Activated B cell treated with CpG ODN at 0.5 μM for 24 hours (primary cell): ENCODE measurements at regions of chr6 and their contacts with region 1.

Region 1: DNA sequence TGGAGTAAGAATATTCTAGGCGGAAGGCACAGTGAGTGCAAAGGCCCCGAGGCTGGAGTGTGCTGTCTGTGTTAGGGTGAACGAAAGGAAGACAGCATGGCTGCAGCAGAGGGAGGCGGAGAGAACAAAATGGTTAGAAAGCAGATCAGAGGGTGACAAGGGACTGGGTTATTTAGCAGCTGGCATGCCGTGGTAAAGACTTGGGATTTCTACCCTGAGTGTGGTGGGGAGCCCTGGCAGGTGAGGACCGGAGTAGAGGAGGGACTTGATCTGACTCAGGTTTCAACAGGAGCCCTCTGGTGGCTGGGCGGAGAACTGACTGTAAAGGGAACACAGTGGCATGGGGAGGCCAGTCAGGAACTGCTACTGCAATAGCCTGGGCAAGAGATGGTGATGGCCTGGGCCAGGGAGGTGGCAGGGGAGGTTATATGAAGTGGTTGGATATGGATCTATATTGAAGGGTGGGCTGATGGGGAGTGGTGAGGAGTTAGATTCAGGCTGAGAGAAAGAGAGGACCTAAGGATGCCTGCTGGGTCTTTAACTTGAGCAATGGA is 38.0 kb downstream of the PIM1 start:
- DNase-seq: peak; percentile 79
- ATAC-seq: peak; percentile 97
- H3K4me3 Mint-ChIP-seq: no peak overlapping the region
- H3K27ac Mint-ChIP-seq: peak overlapping the region; percentile 5
- H3K4me1 Mint-ChIP-seq: peaks cover 20% of the 10 kb centered on the region
- H3K27me3 Mint-ChIP-seq: no peaks in the 10 kb centered on the region
- CTCF ChIP-seq: no peak

Region 2: DNA sequence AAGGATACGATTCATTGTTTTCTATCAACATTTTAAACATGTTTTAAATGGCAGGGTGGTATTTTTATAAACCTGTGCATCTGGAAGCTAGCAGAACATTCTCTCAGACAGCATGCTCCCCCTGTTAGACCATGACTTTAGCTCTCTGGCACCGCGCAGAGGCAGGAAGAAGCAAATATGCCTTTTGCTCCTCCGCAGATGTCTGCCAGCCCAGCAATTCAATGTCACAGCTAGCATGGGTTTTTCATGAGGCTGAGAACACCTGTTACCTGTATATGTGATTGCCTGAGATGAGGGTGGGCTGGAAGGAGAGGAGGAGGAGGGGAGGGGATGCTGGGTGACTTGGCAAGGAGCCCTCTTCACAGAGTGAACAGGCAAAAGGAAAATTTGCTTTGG is 228.6 kb before region 1 on chr6:
- CTCF ChIA-PET with region 1: interaction called, 15 read pairs
- POLR2A ChIA-PET with region 1: no interaction called
- intact Hi-C with region 1: loop called (anchors 1 kb)
- DNase-seq: no peak
- ATAC-seq: peak; percentile 58
- H3K4me3 Mint-ChIP-seq: no peak overlapping the region
- H3K27ac Mint-ChIP-seq: no peak overlapping the region
- H3K4me1 Mint-ChIP-seq: peaks cover 30% of the 10 kb centered on the region
- H3K27me3 Mint-ChIP-seq: no peaks in the 10 kb centered on the region
- CTCF ChIP-seq: no peak

Region 3: DNA sequence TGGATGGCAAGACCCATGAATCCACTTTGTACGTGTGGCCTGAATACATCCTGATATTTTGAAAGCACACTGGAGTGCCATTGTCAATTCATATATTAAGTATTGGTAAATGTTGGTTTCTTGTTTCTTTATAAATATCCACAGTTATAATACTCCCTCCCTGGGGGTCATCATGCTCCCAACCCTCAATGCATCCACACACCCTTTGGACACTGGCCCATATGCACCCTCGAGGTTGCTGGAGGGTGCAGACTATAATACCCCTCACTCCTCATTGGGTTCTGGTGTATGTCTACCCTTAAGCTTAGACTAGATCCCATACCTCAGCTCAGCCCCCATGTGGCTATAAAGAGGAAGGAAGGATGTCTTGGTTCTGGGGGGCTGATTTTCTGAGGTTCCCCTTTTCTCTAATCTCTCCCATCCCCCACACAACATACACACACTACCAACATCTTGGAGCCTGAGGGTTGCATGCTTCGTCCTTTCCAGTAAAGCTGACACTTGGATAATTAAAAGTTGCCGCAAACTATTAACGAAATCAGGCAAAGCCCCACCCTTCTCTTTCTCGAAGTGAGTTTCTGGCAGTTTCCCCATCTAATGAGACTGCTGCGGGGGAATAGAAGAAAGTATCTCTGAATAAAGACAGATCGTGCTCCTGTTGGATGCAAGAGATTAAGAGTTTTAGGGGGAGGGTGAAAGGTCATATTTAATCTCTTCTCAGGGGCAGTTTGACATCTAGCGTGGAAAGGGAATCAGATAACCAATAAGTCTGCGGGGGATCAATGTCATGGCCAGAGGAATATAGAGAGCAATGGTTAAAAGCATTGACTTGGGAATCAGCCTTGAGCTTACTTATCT is 30.7 kb before region 1 on chr6:
- CTCF ChIA-PET with region 1: interaction called, 114 read pairs
- POLR2A ChIA-PET with region 1: interaction called, 14 read pairs
- intact Hi-C with region 1: loop called (anchors 1 kb)
- DNase-seq: no peak
- ATAC-seq: peak; percentile 37
- H3K4me3 Mint-ChIP-seq: peak overlapping the region; percentile 65
- H3K27ac Mint-ChIP-seq: peak overlapping the region; percentile 90
- H3K4me1 Mint-ChIP-seq: peaks cover 62% of the 10 kb centered on the region
- H3K27me3 Mint-ChIP-seq: no peaks in the 10 kb centered on the region
- CTCF ChIP-seq: no peak